Vagina (tissue), 2 donors: ENCODE measurements at regions of chr4 and their contacts with region 1.

Region 1: DNA sequence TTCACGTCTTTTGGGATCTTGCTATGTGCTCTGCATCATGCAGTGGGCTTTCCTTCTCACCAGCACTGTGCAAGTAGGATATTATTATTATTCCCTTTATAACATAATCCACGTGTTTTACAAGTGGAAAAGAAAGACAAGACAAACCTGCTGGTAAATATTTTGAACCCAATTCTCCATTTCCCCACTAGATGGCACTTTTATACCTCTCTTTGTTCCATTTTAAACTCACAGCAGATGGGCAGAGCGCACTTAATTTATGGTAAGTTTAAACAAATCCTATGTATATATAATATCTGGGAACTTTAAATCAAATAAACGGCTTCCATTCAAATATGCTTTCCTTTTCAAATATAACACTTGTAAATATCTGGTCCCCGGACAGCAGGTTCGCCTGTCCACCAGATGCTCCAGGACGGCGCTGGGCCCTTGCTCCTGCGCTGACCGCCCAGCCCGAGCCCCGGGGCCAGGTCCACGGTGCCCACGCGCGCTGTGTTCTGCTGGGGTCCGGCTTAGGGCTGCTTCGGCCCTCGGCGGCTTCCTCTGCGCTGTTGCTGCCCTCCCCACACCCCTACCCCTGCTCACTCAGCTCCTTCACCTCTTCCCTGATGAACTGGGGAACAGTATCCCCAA is 31.1 kb downstream of the F11 start:
- DNase-seq: no peak
- H3K4me3 ChIP-seq: no peak overlapping the region
- H3K27ac ChIP-seq: no peak overlapping the region
- H3K4me1 ChIP-seq: no peaks in the 10 kb centered on the region
- H3K27me3 ChIP-seq: peaks cover 3% of the 10 kb centered on the region
- CTCF ChIP-seq: peak in 2 of 3 experiments; percentile 36 to 47
- POLR2A ChIP-seq: no peak

Region 2: DNA sequence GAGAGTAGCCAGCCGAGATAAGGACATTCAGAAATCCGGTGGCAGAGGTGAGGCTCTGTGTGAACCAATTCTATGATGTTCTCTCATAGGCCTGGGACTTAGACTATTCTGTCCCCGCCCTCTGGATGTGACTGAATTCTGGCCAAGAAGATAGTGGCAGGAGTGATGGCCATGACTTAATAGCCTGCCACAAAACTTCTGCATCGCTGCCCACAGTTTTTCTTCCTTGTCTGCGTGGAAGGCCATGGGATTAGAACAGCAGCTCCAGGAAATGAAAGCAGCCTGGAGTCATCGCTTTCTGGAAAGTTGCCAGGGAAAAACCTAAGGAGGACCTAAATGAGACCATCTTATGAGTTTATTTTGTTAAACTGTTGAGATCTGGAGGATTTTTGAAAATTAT is 103.5 kb after region 1 on chr4:
- intact Hi-C with region 1: no loop called
- DNase-seq: no peak
- H3K4me3 ChIP-seq: no peak overlapping the region
- H3K27ac ChIP-seq: no peak overlapping the region
- H3K4me1 ChIP-seq: no peaks in the 10 kb centered on the region
- H3K27me3 ChIP-seq: no peaks in the 10 kb centered on the region
- CTCF ChIP-seq: no peak
- POLR2A ChIP-seq: no peak

Region 3: DNA sequence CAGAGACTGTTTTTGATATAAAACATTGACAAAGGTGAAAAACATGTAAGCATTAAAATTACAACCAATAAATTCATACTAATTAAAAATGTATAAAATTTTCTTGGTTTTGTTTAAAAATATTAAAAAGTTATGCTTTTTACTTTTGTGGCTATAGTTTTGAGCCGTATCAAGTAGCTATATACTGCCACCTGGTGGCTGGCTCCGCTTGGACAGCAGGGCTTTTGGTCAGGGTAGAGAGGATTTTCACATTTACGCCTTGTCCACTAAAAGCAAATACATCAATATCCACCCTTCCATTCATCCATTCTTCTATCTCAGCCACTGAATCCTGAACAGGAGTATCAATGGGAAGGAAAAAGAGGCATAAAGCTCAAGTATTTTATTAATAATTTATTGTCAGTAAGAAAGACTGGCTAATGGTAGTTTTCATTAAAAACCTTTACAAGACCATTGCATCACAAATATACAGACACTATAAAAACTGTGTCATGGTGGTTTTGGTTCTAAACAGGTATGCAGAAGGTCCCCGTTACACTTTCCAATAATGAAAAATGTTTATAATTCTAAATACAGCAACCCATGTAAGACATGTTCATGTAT is 290.4 kb after region 1 on chr4:
- intact Hi-C with region 1: loop called (anchors 10 kb)
- DNase-seq: peak in 1 of 2 donors; percentile 60
- H3K4me3 ChIP-seq: no peak overlapping the region
- H3K27ac ChIP-seq: no peak overlapping the region
- H3K4me1 ChIP-seq: no peaks in the 10 kb centered on the region
- H3K27me3 ChIP-seq: no peaks in the 10 kb centered on the region
- CTCF ChIP-seq: peak; percentile 28 to 93 (median 72)
- POLR2A ChIP-seq: no peak

Region 4: DNA sequence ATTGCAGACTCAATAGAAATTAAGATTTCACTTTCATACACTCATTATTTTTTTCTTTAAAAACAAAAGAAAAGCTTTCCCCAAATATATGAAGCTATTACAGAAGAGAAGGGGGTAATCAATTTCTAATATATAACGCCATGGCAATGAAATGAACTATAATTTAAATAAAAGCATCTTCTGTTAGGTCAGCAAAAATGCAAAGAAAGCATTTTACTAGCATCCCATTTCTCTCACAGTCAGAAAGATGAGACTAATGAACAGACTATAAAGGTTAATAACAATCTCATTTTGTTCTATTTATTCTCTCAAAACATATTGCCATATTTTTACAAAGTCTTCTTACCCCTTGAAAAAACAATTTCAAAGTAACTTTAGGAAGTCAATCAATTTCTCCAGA is 1931.2 kb after region 1 on chr4:
- intact Hi-C with region 1: no loop called
- DNase-seq: no peak
- H3K4me3 ChIP-seq: no peak overlapping the region
- H3K27ac ChIP-seq: no peak overlapping the region
- H3K4me1 ChIP-seq: no peaks in the 10 kb centered on the region
- H3K27me3 ChIP-seq: no peaks in the 10 kb centered on the region
- CTCF ChIP-seq: no peak
- POLR2A ChIP-seq: no peak